ENCODE measurements at regions of chr20 and their contacts with region 1.

Region 1: GRCh38 chr20:3383878-3384495 is 23.5 kb downstream of the DNAAF9 start:
- DNase-seq: no peak
- H3K4me3 Mint-ChIP-seq: peak overlapping the region; percentile 12
- H3K27ac Mint-ChIP-seq: peak overlapping the region; percentile 49
- H3K4me1 Mint-ChIP-seq: peaks cover 17% of the 10 kb centered on the region
- H3K27me3 Mint-ChIP-seq: no peaks in the 10 kb centered on the region

Region 2: DNA sequence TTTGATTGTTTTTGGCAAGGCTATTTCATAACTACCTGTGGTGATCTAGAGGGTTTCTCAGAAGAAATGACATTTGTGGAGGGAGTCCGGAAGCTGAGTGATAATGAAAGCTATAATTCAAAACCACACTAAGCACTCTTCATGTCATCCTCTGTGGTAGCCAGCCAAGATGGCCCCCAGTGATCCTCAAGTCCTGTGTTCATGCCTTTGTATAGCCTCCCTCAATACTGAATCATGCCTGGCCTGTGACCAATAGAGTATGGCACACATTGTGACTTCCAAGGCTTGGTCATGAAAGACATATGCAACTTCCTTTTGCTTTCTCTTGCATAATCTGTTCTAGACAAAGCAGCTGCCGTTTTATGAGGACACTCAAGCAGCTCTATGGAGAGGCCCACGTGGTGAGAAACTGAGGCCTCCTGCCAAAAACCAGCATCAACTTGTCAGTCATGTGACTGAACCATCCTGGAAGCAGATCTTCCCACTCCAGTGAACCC is 36.3 kb after region 1 on chr20:
- intact Hi-C with region 1: loop called (anchors 1 kb)
- DNase-seq: peak; percentile 62
- H3K4me3 Mint-ChIP-seq: peak overlapping the region; percentile 40
- H3K27ac Mint-ChIP-seq: peak overlapping the region; percentile 80
- H3K4me1 Mint-ChIP-seq: peaks cover 10% of the 10 kb centered on the region
- H3K27me3 Mint-ChIP-seq: peaks cover 4% of the 10 kb centered on the region

Measured in activated T-helper 1 cell treated with anti-CD3 and anti-CD28 coated beads, Interleukin-12 subunit alpha, Interleukin-12 subunit beta, Interleukin-2, Interleukin-4 antibody, amounts not matched to agents 30 ng/mL and 10 ng/mL and 1 ng/mL, durations not matched to agents 14 hours and 24 hours and 36 hours (primary cell).